GM12878 (cell line): ENCODE measurements at regions of chr3 and their contacts with region 1.

Region 1: DNA sequence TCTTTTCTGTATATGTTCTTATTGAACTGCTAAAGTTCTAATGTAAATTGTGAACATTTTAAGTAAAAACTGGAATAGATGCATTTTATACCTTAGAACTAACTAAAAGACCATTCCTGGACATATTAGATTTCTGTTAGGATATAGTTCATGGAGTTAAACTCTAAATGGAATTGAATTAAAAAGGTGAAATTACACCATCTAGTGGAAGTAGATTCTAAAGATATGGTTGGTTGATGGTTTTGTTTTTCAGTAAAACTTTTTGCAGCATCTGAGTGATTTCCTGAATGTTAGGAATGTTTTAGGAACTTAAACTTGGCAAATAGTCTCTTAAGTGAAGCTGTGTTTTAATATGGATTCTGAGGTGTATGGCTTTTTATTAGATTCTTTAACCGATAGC is 96.8 kb downstream of the SLMAP start:
- DNase-seq: no peak
- ATAC-seq: no peak
- H3K4me3 ChIP-seq: no peak overlapping the region
- H3K27ac ChIP-seq: no peak overlapping the region
- H3K4me1 ChIP-seq: no peaks in the 10 kb centered on the region
- H3K27me3 ChIP-seq: no peaks in the 10 kb centered on the region
- CTCF ChIP-seq: peak in 1 of 3 experiments; percentile 34; a peak in 1 of 6 replicates
- EP300 ChIP-seq: no peak
- POLR2A ChIP-seq: no peak
- RAD21 ChIP-seq: peak; percentile 27; the same call in 1 of the 2 replicates

Region 2: DNA sequence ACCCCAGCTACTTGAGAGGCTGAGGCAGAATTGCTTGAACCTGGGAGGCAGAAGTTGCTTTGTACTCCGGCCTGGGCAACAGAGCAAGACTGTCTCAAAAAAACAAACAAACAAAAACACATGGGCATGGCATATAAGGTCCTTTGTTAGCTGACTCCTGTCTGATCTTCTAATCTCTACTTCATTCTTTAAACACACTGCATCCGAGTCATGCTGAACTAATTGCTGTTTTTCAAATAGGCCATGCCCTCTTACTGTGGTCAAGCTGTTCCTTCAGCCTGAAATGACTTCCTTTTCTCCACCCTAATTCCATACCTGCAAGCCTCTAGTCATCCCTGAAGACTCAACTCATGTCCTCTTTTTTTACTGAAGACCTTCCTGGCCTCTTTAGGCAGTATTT is 119.1 kb before region 1 on chr3:
- CTCF ChIA-PET with region 1: no interaction called
- POLR2A ChIA-PET with region 1: no interaction called
- RAD21 ChIA-PET with region 1: no interaction called
- SMC1A ChIA-PET with region 1: no interaction called
- in situ Hi-C with region 1: no loop called
- intact Hi-C with region 1: no loop called
- DNase-seq: no peak
- ATAC-seq: no peak
- H3K4me3 ChIP-seq: no peak overlapping the region
- H3K27ac ChIP-seq: no peak overlapping the region
- H3K4me1 ChIP-seq: no peaks in the 10 kb centered on the region
- H3K27me3 ChIP-seq: no peaks in the 10 kb centered on the region
- CTCF ChIP-seq: no peak
- EP300 ChIP-seq: no peak
- POLR2A ChIP-seq: no peak
- RAD21 ChIP-seq: no peak

Region 3: DNA sequence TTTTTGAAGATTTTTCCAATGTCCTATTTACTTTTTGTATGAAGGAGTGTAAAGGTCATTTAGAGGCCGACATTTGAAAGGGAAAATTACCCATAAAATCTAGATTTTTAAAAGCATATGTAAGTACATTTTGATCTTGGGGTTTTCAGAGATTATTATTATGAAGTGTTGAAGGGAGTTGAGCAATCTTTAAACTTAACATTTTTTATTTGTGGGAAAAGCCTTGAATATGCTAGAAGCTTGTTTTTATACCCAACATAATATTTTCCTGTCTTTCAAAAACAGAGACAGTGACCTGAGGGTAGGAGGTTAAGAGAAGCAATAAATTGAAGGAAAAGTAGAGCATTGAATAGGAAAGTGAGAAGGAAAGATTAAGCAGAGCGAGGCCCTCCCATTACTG is 11.1 kb before region 1 on chr3:
- CTCF ChIA-PET with region 1: interaction called, 8 read pairs
- POLR2A ChIA-PET with region 1: interaction called, 6 read pairs
- RAD21 ChIA-PET with region 1: interaction called, 4 read pairs
- SMC1A ChIA-PET with region 1: interaction called, 10 read pairs
- in situ Hi-C with region 1: no loop called
- intact Hi-C with region 1: no loop called
- DNase-seq: no peak
- ATAC-seq: no peak
- H3K4me3 ChIP-seq: no peak overlapping the region
- H3K27ac ChIP-seq: no peak overlapping the region
- H3K4me1 ChIP-seq: peaks cover 6% of the 10 kb centered on the region; the same call in 1 of the 2 replicates
- H3K27me3 ChIP-seq: no peaks in the 10 kb centered on the region
- CTCF ChIP-seq: no peak
- EP300 ChIP-seq: no peak
- POLR2A ChIP-seq: no peak
- RAD21 ChIP-seq: no peak

Region 4: DNA sequence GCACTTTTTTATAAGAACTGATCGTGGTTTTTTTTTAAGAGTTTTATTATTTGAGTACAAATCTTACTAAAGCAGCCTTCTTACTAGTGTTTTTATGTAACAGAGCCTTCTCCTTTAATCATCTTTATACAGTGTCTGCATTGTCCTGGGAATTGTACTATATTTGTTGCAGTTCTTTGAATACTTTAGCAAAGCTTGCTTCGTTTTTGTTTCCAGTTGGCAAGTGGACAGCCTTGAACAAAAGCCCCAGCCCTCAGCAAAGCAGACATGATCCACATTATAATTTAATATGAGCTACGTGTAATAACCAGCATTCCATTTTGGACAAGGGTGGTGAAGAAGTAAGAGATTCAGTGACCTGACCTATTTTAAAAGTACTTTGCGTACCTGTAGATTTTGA is 43.1 kb after region 1 on chr3:
- CTCF ChIA-PET with region 1: no interaction called
- POLR2A ChIA-PET with region 1: no interaction called
- RAD21 ChIA-PET with region 1: no interaction called
- SMC1A ChIA-PET with region 1: no interaction called
- in situ Hi-C with region 1: no loop called
- intact Hi-C with region 1: no loop called
- DNase-seq: no peak
- ATAC-seq: no peak
- H3K4me3 ChIP-seq: no peak overlapping the region
- H3K27ac ChIP-seq: no peak overlapping the region
- H3K4me1 ChIP-seq: no peaks in the 10 kb centered on the region
- H3K27me3 ChIP-seq: no peaks in the 10 kb centered on the region
- CTCF ChIP-seq: no peak
- EP300 ChIP-seq: no peak
- POLR2A ChIP-seq: no peak
- RAD21 ChIP-seq: no peak